Heart right ventricle (tissue), 16 donors: ENCODE measurements at regions of chr4 and their contacts with region 1.

Region 1: GRCh38 chr4:114378306-114378903 is 220.2 kb upstream of the UGT8 start:
- DNase-seq: no peak
- ATAC-seq: no peak
- H3K4me3 ChIP-seq: no peak overlapping the region
- H3K27ac ChIP-seq: no peak overlapping the region
- H3K4me1 ChIP-seq: no peaks in the 10 kb centered on the region
- H3K27me3 ChIP-seq: no peaks in the 10 kb centered on the region
- CTCF ChIP-seq: peak in 7 of 9 donors; percentile 8 to 69 (median 55)

Region 2: GRCh38 chr4:113952452-113953029 is 425.9 kb before region 1 on chr4:
- intact Hi-C with region 1: loop called in 5 of 10 experiments (anchors 5 to 10 kb)
- DNase-seq: peak in 1 of 2 donors; percentile 16
- ATAC-seq: peak; percentile 34 to 77 (median 67)
- H3K4me3 ChIP-seq: no peak overlapping the region
- H3K27ac ChIP-seq: no peak overlapping the region
- H3K4me1 ChIP-seq: peaks cover 0 to 21% (median 6%) of the 10 kb centered on the region in 9 donors
- H3K27me3 ChIP-seq: peaks cover 0 to 16% (median 0%) of the 10 kb centered on the region in 7 donors
- CTCF ChIP-seq: peak; percentile 37 to 72 (median 66)

Region 3: GRCh38 chr4:113969709-113970334 is 408.6 kb before region 1 on chr4:
- intact Hi-C with region 1: loop called in 1 of 10 experiments (anchors 5 kb)
- DNase-seq: no peak
- ATAC-seq: no peak
- H3K4me3 ChIP-seq: no peak overlapping the region
- H3K27ac ChIP-seq: no peak overlapping the region
- H3K4me1 ChIP-seq: no peaks in the 10 kb centered on the region
- H3K27me3 ChIP-seq: no peaks in the 10 kb centered on the region
- CTCF ChIP-seq: no peak

Region 4: DNA sequence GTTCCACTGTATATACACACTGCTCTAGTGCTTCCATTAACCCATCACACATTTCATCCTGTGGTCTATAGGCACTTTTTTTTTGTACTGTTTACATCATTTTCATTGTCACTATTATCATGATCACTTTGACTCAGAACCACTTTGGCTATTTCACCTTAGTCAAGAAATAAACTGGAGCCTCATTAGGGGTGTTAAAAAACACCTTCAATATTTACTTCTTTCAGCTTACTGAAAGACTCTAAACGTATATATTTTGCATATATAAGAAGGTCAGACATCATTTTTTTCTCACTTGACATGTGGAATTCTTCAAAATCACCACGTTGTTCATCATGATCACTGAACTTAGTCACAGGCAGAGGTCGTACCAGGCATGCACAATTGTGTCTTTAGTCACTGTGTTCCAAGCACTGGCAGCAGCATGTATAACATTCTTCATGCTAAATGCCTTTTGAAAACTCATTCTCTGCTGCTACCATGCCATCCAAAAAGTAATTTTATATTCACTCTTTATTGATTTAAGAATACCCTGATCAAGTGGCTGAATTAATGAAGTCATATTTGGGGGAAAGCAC is 169.7 kb before region 1 on chr4:
- intact Hi-C with region 1: loop called in 2 of 10 experiments (anchors 10 kb)
- DNase-seq: no peak
- ATAC-seq: no peak
- H3K4me3 ChIP-seq: no peak overlapping the region
- H3K27ac ChIP-seq: no peak overlapping the region
- H3K4me1 ChIP-seq: no peaks in the 10 kb centered on the region
- H3K27me3 ChIP-seq: no peaks in the 10 kb centered on the region
- CTCF ChIP-seq: peak in 4 of 9 donors; percentile 11 to 23 (median 16)

Region 5: DNA sequence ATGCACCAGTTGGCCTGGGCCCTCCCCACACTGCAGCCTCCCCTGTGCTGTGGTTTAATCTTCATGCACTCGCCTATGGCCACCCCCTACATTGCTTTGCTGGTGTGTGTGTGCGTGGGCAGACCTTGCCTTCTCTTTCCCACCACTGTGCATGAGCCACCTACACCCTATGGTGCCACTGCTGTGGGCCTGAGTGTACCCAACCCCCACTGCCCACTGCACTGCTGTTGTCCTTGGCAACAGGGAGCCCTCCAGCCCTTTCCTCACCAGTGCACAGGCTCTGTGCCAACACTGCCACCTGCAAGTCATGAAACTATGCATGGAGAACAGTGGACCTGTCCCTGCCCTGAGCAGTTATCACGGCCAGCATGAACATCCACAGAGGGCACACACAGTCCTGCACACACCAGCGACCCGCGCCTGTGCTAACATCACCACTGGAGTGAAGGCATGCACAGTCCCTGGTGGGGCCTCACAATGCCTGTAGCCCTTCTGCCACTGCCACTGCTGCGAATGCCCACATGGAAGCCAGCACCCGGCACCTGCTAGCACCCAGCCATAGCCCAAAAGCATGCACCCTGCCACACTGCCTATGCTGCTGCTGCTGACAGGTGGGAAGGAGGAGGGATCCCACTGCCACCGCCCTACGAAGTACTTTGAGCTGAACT is 161.1 kb before region 1 on chr4:
- intact Hi-C with region 1: loop called in 1 of 10 experiments (anchors 10 kb)
- DNase-seq: no peak
- ATAC-seq: peak in 2 of 8 donors; percentile 20 to 41
- H3K4me3 ChIP-seq: no peak overlapping the region
- H3K27ac ChIP-seq: no peak overlapping the region
- H3K4me1 ChIP-seq: no peaks in the 10 kb centered on the region
- H3K27me3 ChIP-seq: no peaks in the 10 kb centered on the region
- CTCF ChIP-seq: no peak